ENCODE measurements at regions of chr2 and their contacts with region 1.

Region 1: DNA sequence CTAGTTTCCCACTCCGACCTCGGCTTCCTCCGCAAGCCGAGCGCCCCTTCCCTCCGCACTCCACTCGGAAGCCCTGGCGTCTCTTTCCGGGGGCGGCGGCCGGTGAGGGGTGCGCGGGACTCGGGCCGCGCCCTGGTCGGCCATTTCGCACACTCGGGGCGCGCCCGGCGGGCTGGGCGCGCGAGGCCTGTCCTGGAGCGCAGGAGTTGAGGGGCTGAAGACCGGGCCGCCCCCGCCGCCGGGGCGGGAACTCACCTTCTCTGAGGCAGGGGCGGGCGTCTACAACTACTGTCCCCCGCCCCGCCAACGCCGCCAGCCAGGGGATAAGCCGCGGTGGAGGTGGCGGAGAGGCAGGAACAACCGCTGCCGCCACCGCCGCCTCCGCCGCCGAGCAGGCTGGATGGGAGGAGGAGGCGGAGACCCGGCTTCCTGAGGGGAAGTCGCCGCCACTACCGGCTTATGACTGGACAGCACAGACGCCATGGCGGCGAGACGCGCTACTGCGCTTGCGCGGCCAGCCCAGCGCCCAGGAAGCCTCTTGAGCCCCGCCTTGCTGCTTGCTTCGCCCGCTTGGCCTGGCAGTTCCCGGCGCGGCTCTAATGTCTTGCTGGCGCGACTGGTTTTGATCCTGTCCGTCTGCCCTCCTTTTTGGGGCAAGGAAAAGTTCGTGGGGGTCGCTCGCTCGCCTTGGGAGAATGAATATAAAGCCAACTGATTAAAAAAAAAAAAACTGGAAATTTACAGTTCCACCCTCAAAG is at the start of gene KRCC1:
- DNase-seq: peak; percentile 94
- ATAC-seq: peak; percentile 95
- H3K4me3 ChIP-seq: peak within 1 kb of the TSS; percentile 79 to 97 (median 96)
- H3K27ac ChIP-seq: peak within 1 kb of the TSS; percentile 93
- H3K4me1 ChIP-seq: peaks cover 71% of the 10 kb centered on the region
- H3K27me3 ChIP-seq: no peaks in the 10 kb centered on the region; a peak in 1 of 5 replicates
- CTCF ChIP-seq: no peak; the same call in 1 of the 2 replicates
- EP300 ChIP-seq: no peak
- POLR2A ChIP-seq: peak; percentile 89 to 91
- RAD21 ChIP-seq: peak; percentile 80
- total RNA-seq, gene KRCC1: 6.5 and 10.0 TPM in 2 replicates

Region 2: DNA sequence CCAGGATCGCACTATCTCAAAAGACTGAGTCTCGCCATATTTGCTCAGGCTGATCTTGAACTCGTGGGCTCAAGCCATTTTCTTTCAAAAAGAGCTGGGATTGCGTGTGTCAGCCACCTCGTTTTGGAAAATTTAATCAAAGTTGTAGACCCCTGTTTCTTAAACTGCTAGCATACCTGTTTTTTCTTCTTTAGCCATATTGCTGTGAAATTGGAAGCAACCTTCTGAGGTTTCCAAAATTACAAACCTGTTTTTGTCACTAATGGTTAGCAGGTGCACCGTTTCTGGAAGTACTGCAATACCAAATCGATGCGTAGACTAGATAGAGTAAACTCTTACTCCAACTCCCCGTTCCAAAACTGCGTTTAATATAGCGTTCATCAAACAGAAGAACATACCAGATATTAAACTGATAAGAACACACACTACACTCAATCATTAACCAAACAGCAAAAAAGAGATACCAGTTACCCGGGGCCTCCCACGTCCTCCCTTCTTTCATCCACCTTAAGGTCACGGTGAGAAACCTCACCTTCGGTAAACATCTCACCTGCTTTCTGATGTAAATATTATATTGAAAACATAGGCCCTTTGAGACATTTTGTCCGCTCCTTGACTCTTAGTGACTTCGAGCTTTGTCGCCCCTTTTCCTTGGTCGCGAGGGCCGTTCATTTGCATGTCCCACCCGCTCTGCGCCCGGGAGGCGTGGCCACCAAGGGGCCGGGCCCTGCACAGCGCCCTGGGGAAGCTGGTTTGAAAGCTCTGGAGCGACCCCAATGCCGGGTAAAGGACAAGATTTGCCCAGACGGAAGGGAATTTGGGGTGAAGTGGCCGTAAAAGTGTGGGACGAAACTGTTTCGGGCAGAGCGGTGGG is 39.2 kb before region 1 on chr2 and contains the start of gene RNU2-63P:
- CTCF ChIA-PET with region 1: no interaction called
- POLR2A ChIA-PET with region 1: interaction called, 35 read pairs
- in situ Hi-C with region 1: no loop called
- intact Hi-C with region 1: loop called (anchors 1 kb)
- DNase-seq: peak; percentile 96
- ATAC-seq: peak; percentile 91
- H3K4me3 ChIP-seq: peak within 1 kb of the TSS; percentile 77 to 91 (median 77)
- H3K27ac ChIP-seq: peak within 1 kb of the TSS; percentile 96
- H3K4me1 ChIP-seq: peaks cover 37% of the 10 kb centered on the region
- H3K27me3 ChIP-seq: no peaks in the 10 kb centered on the region; a peak in 1 of 5 replicates
- CTCF ChIP-seq: peak; percentile 18; the same call in 1 of the 2 replicates
- EP300 ChIP-seq: peak; percentile 22 to 69; a peak in 3 of 4 replicates
- POLR2A ChIP-seq: peak; percentile 97 to 100
- RAD21 ChIP-seq: peak; percentile 62
- total RNA-seq, gene RNU2-63P: 6.8 TPM in 1 of 2 replicates, not detected in the other

Region 3: GRCh38 chr2:88159955-88160415 is 104.4 kb after region 1 on chr2:
- CTCF ChIA-PET with region 1: interaction called, 76 read pairs
- POLR2A ChIA-PET with region 1: interaction called, 20 read pairs
- in situ Hi-C with region 1: loop called (anchors 5 kb)
- intact Hi-C with region 1: loop called (anchors 1 kb)
- DNase-seq: peak; percentile 82
- ATAC-seq: peak; percentile 85
- H3K4me3 ChIP-seq: peak overlapping the region in 1 of 3 experiments; percentile 35; a peak in 1 of 6 replicates
- H3K27ac ChIP-seq: no peak overlapping the region
- H3K4me1 ChIP-seq: peaks cover 40% of the 10 kb centered on the region
- H3K27me3 ChIP-seq: 0 out of 5 replicates have a peak, but pooled peaks cover 0 to 11% of the 10 kb centered on the region in 2 experiments
- CTCF ChIP-seq: peak; percentile 97
- EP300 ChIP-seq: no peak
- POLR2A ChIP-seq: no peak
- RAD21 ChIP-seq: peak; percentile 97

Region 4: DNA sequence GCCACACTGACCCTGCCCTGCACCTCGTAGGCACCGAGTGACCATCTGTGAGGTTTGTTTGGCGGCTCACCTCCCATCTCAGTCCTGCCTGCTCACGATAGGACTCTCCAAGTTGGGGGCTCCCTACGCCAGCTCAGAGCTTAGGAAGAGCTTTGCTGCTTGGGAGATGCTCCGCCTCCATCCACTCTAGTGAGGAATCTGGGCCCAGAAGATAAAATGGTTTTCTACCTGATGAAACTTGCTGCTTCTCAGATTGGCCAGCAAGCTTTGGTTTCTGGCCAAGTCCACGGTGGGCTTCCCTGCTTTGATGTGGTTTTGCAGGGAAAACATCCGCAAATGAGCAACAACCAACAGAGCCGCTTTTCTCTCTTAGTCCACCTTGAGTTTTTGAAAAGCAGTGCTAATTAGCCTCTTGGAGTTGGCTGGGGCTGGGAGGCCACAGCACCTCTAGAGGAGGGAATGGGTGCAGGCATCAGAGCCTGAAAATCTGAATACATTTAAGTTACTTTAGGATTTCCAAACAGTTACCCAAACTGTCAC is 156.8 kb after region 1 on chr2:
- CTCF ChIA-PET with region 1: no interaction called
- POLR2A ChIA-PET with region 1: interaction called, 16 read pairs
- in situ Hi-C with region 1: no loop called
- intact Hi-C with region 1: no loop called
- DNase-seq: peak; percentile 90
- ATAC-seq: peak; percentile 80
- H3K4me3 ChIP-seq: peak overlapping the region in 1 of 3 experiments; percentile 47; a peak in 2 of 6 replicates
- H3K27ac ChIP-seq: peak overlapping the region; percentile 88
- H3K4me1 ChIP-seq: peaks cover 63% of the 10 kb centered on the region
- H3K27me3 ChIP-seq: no peaks in the 10 kb centered on the region
- CTCF ChIP-seq: peak; percentile 69
- EP300 ChIP-seq: peak in 1 of 2 experiments; percentile 92; a peak in 2 of 4 replicates
- POLR2A ChIP-seq: no peak
- RAD21 ChIP-seq: peak; percentile 79

Region 5: GRCh38 chr2:88451811-88452565 is 396.4 kb after region 1 on chr2:
- CTCF ChIA-PET with region 1: no interaction called
- POLR2A ChIA-PET with region 1: no interaction called
- in situ Hi-C with region 1: loop called (anchors 25 kb)
- intact Hi-C with region 1: no loop called
- DNase-seq: no peak
- ATAC-seq: peak; percentile 15; the same call in 1 of the 3 replicates
- H3K4me3 ChIP-seq: no peak overlapping the region; a peak in 1 of 6 replicates
- H3K27ac ChIP-seq: no peak overlapping the region
- H3K4me1 ChIP-seq: no peaks in the 10 kb centered on the region
- H3K27me3 ChIP-seq: peaks cover 0 to 29% of the 10 kb centered on the region in 2 experiments; a peak in 3 of 5 replicates
- CTCF ChIP-seq: no peak
- EP300 ChIP-seq: no peak
- POLR2A ChIP-seq: no peak
- RAD21 ChIP-seq: no peak

Measured in HepG2 (cell line).